ENCODE measurements at regions of chr13 and their contacts with region 1.

Region 1: GRCh38 chr13:19587635-19588300 is 26.4 kb upstream of the TPTE2 start:
- DNase-seq: peak; percentile 51
- H3K4me3 ChIP-seq: no peak overlapping the region
- H3K27ac ChIP-seq: no peak overlapping the region
- H3K4me1 ChIP-seq: no peaks in the 10 kb centered on the region
- H3K27me3 ChIP-seq: no peaks in the 10 kb centered on the region
- CTCF ChIP-seq: peak; percentile 33 to 35
- POLR2A ChIP-seq: no peak

Region 2: GRCh38 chr13:19289180-19289579 is 298.6 kb before region 1 on chr13:
- CTCF ChIA-PET with region 1: no interaction called
- POLR2A ChIA-PET with region 1: no interaction called
- dilution Hi-C with region 1: no loop called
- intact Hi-C with region 1: no loop called
- DNase-seq: no peak
- H3K4me3 ChIP-seq: no peak overlapping the region
- H3K27ac ChIP-seq: no peak overlapping the region
- H3K4me1 ChIP-seq: no peaks in the 10 kb centered on the region
- H3K27me3 ChIP-seq: no peaks in the 10 kb centered on the region
- CTCF ChIP-seq: no peak
- POLR2A ChIP-seq: no peak

Region 3: DNA sequence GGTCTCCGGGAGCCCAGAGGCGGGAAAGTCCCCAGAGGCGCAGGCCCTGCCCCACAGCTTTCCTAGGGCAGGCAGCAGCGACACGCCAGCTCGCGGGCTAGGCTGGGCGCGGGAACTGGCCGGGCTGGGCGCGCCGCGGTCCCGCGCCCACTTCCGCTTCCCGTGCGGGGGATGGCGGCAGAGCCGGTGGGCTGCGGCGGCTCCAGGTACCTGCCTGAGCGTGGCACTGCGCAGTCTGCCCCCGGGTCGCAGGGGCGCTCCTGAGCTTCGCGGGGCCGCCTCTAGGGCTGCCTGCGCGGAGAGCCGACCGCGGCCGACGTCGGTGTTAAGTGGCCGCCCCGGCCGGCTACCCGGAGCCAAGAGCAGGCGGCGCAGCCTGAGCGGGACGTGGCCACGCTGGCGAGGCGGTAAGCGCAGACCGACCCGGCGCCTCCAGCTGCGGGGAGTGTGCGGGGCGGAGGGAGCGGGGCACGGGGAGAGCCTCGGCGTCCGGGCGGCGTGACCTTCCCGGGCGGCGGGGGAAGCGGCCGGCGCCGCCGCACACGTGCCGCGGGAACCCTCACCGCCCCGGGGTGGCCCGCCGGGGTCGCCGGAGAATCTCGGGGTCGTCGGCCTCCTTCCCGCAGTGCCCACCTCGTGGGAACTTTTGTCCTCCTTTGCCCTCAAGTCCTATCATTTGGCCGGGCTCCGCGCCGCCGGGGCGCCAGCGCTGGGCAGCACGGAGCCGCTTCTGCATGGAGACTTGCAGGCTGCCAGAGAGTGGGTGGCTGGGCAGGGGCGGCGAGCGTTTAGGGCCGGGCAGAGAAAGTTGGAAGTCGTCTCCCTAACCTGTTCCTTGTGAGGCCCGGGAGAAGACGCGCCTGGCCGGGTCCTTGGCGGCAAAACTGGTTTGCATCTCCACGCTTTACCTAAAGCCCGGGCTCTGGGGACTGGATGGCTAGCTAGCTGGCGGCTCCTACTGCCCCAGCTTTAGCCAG is 14.3 kb after region 1 on chr13:
- CTCF ChIA-PET with region 1: interaction called, 11 read pairs
- POLR2A ChIA-PET with region 1: no interaction called
- dilution Hi-C with region 1: no loop called
- intact Hi-C with region 1: no loop called
- DNase-seq: peak; percentile 52
- H3K4me3 ChIP-seq: peak overlapping the region; percentile 46 to 68 (median 63)
- H3K27ac ChIP-seq: peak overlapping the region; percentile 29
- H3K4me1 ChIP-seq: peaks cover 10% of the 10 kb centered on the region
- H3K27me3 ChIP-seq: no peaks in the 10 kb centered on the region
- CTCF ChIP-seq: peak in 1 of 2 donors; percentile 39
- POLR2A ChIP-seq: no peak

Region 4: DNA sequence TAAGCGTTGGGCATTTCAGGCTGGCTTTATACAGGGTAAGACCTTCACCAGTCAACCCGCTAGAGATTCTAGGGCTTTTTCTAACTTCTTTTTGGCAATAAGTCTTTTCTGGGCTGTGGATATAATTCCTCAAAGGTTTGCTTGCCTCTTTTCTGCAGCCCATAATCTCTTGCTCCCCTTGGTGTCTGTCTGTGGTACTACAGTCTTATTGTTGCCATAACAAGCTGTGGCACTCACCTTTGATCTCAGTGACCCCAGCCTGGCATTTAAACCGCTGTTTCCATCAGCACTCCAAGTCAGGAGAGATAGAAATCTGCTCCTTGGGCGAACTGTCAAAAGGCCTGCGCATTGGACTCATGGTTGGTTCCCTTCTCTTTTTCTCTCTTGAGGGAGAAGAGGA is 31.2 kb after region 1 on chr13:
- CTCF ChIA-PET with region 1: interaction called, 18 read pairs
- POLR2A ChIA-PET with region 1: no interaction called
- dilution Hi-C with region 1: no loop called
- intact Hi-C with region 1: no loop called
- DNase-seq: peak; percentile 48
- H3K4me3 ChIP-seq: no peak overlapping the region
- H3K27ac ChIP-seq: no peak overlapping the region
- H3K4me1 ChIP-seq: no peaks in the 10 kb centered on the region
- H3K27me3 ChIP-seq: no peaks in the 10 kb centered on the region
- CTCF ChIP-seq: peak; percentile 52 to 68
- POLR2A ChIP-seq: no peak

Region 5: DNA sequence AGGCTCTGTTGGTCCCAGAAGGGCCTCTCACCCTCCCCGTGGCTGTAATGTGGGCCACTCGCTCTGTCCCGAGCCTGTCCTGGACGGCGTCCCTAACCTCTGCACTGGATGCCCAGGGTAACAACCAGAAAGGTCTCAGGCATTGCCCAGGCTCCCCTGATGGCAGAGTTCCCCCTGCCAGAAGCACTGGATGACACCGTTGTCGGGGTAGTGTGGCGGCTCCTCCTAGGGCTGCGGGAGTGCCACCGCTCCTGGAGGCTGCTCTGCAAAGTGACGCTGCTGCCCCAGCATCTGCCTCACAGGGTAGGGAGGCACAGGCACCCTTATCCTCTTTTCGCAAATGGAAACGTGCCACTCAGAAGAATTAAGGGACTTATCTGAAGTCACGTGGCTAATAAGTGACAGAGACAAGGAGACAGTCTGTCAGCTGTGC is 77.7 kb after region 1 on chr13:
- CTCF ChIA-PET with region 1: no interaction called
- POLR2A ChIA-PET with region 1: no interaction called
- dilution Hi-C with region 1: no loop called
- intact Hi-C with region 1: no loop called
- DNase-seq: no peak
- H3K4me3 ChIP-seq: no peak overlapping the region
- H3K27ac ChIP-seq: no peak overlapping the region
- H3K4me1 ChIP-seq: no peaks in the 10 kb centered on the region
- H3K27me3 ChIP-seq: no peaks in the 10 kb centered on the region
- CTCF ChIP-seq: no peak
- POLR2A ChIP-seq: no peak

Region 6: GRCh38 chr13:19720039-19720438 is 132.3 kb after region 1 on chr13:
- CTCF ChIA-PET with region 1: no interaction called
- POLR2A ChIA-PET with region 1: no interaction called
- dilution Hi-C with region 1: no loop called
- intact Hi-C with region 1: no loop called
- DNase-seq: no peak
- H3K4me3 ChIP-seq: no peak overlapping the region
- H3K27ac ChIP-seq: no peak overlapping the region
- H3K4me1 ChIP-seq: no peaks in the 10 kb centered on the region
- H3K27me3 ChIP-seq: no peaks in the 10 kb centered on the region
- CTCF ChIP-seq: no peak
- POLR2A ChIP-seq: no peak

Region 7: DNA sequence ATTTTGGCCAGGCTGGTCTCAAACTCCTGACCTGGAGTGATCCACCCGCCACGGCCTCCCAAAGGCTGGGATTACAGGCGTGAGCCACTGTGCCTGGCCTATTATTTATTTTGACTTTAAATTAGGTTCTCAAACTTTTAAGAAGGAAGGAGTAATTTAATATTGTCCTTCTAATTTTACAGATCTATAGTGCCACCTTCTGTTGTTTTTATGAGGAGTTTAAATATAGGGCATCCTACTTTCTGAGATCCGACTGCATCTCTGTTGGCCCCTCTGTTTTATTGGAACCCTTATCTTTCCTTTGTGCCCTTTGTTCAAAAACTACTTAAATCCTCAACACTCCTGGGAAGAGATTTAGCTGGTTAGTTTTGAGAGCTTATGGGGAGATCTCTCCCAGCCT is 301.0 kb after region 1 on chr13:
- CTCF ChIA-PET with region 1: interaction called, 16 read pairs
- POLR2A ChIA-PET with region 1: no interaction called
- dilution Hi-C with region 1: no loop called
- intact Hi-C with region 1: no loop called
- DNase-seq: peak; percentile 22
- H3K4me3 ChIP-seq: no peak overlapping the region
- H3K27ac ChIP-seq: no peak overlapping the region
- H3K4me1 ChIP-seq: no peaks in the 10 kb centered on the region
- H3K27me3 ChIP-seq: no peaks in the 10 kb centered on the region
- CTCF ChIP-seq: no peak
- POLR2A ChIP-seq: no peak

Measured in endothelial cell of umbilical vein (primary cell).